Common myeloid progenitor, CD34-positive (primary cell): ENCODE measurements at regions of chr3 and their contacts with region 1.

Region 1: DNA sequence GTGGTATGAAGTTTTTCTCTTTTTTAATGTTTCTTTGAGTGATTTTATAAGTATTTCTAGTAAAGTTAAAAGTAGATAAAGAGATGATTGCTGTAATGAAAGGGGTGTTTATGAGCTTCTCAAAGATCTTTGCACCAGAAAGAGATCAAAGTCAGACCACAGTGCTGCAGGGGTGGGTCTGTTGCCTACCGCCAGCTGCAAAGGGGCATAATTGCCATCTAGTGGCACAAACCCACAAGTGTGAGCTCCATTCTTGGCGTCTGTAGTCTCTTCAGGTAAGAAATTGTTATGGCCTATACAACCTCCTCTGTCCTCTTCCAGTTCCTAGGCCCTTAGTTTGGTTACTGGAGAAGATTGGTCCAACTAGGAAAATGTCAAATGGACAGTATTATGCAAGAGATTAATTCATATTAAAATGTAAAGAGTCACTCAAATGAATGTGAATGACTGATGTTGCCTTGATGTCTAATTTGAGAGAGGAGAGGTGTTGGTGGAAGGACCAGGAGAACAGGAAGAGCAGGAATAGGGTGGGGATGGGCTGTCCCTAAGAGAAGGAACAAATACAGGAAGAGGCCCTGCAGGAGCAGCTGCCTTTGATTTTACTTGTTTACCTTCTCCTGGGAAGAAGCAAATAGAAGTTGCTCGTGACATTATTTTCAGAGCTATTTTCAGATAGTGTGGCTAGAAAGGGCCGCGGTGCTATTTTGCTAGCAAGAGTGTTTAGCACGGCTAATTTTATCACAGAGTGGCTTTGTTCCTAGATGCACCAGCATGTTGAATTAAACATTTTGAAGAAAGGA is 53.0 kb upstream of the GSK3B start:
- DNase-seq: peak; percentile 45 to 71 (median 67)
- H3K4me3 ChIP-seq: no peak overlapping the region
- H3K27ac ChIP-seq: no peak overlapping the region
- H3K4me1 ChIP-seq: peaks cover 0 to 22% (median 19%) of the 10 kb centered on the region in 4 experiments
- H3K27me3 ChIP-seq: no peaks in the 10 kb centered on the region

Region 2: DNA sequence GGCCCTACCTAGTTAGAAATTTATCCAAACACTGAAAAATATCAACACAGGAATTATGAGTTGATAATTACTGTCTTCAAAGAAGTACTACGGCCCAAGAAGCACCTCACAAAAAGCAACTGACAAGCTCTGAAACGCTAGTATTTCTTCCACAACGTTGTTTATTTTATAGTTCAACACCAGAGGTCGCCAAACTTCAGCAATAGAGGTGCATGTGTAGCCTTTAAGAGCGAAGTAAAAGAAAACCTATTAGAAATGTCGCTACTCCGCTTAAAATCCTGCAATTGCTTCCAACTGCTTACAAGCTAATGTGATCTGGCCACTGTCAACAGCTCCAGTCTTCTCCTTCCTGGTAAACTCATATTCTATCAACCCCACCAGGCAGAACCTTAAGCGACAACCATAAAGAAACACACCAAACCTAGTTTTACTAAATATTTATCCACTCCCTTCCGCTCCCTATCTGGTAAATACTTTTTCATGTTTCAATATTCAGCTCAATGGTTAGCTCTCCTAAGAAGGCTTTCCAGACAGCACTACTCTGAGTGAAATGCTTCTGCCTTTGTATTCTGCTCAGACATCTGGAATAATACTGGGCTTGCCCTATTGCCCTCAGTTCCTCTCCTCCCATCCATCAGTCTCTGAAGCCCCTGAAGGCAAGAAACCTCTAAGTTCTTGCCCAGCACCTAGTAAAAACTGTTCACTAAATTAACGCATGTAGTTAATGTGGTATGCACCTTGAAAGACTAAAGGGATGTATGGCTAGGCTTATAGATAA is 255.1 kb before region 1 on chr3:
- CTCF ChIA-PET with region 1: interaction called, 49 read pairs
- POLR2A ChIA-PET with region 1: no interaction called
- DNase-seq: peak; percentile 73 to 89 (median 87)
- H3K4me3 ChIP-seq: peak overlapping the region in 1 of 7 experiments; percentile 17
- H3K27ac ChIP-seq: no peak overlapping the region
- H3K4me1 ChIP-seq: peaks cover 0 to 3% (median 0%) of the 10 kb centered on the region in 4 experiments
- H3K27me3 ChIP-seq: no peaks in the 10 kb centered on the region

Region 3: GRCh38 chr3:120129718-120130513 is 17.4 kb before region 1 on chr3:
- CTCF ChIA-PET with region 1: interaction called, 13 read pairs
- POLR2A ChIA-PET with region 1: no interaction called
- DNase-seq: no peak
- H3K4me3 ChIP-seq: no peak overlapping the region
- H3K27ac ChIP-seq: no peak overlapping the region
- H3K4me1 ChIP-seq: no peaks in the 10 kb centered on the region
- H3K27me3 ChIP-seq: no peaks in the 10 kb centered on the region